Naive thymus-derived CD4-positive, alpha-beta T cell (primary cell): ENCODE measurements at regions of chr5 and their contacts with region 1.

Region 1: DNA sequence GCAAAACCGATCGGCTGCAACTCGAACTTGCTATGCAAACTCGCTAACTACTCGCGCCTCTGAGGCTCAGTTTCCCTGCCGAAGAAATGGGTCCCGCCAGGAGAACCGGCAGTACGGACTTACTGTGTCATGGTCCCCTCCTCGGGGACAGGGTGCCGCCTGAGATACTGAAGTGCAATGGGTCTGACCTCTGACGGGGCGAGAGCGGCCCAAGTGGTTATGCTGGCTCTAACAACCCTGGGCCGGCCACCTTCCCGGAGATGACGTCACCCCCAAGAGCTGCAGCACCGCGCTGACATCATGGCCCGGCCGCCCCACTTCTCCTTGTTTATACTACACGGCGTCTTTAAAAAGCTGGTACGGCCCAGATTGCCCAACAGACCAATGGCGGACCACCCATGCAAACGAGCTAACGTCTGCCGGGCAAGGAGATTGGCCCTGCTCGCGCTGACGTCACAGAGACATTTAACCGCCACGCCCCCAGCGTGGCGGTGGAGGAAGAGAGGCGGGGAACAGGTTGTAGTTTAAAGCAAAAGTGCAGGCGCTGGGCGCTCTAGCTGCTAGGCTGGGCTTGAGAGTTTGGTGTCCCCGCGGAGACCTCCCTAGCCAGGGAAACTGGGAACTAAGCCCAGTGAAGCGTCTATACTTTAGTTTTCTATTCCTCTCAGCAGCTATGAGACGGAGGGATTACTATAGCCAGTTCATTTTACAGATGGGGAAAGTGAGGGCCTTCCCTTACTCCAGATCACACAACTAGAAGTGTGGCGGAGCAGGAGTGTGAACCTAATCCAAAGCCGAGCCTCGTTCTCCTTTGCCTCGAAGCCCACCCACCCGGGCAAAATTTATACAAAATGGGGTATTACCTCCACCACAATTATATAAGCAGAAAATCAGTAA is 654 bp upstream of the RNF44 start:
- DNase-seq: peak; percentile 80 to 99 (median 96)
- ATAC-seq: peak; percentile 83
- H3K4me3 ChIP-seq: peak overlapping the region; percentile 100
- H3K4me3 Mint-ChIP-seq: peak overlapping the region; percentile 96 to 100 (median 99)
- H3K27ac ChIP-seq: peak overlapping the region; percentile 96
- H3K27ac Mint-ChIP-seq: peak overlapping the region; percentile 99 to 100 (median 99)
- H3K4me1 ChIP-seq: peaks cover 57 to 63% of the 10 kb centered on the region in 2 donors
- H3K4me1 Mint-ChIP-seq: peaks cover 55 to 74% (median 71%) of the 10 kb centered on the region in 7 donors
- H3K27me3 ChIP-seq: no peaks in the 10 kb centered on the region
- H3K27me3 Mint-ChIP-seq: no peaks in the 10 kb centered on the region

Region 2: GRCh38 chr5:175517818-175518450 is 1019.9 kb before region 1 on chr5:
- CTCF ChIA-PET with region 1: no interaction called
- POLR2A ChIA-PET with region 1: no interaction called
- intact Hi-C with region 1: loop called in 1 of 2 experiments (anchors 5 kb)
- DNase-seq: peak in 2 of 9 donors; percentile 62 to 81
- ATAC-seq: no peak
- H3K4me3 ChIP-seq: no peak overlapping the region
- H3K4me3 Mint-ChIP-seq: peak overlapping the region; percentile 26 to 80 (median 54)
- H3K27ac ChIP-seq: peak overlapping the region; percentile 22
- H3K27ac Mint-ChIP-seq: peak overlapping the region; percentile 60 to 97 (median 93)
- H3K4me1 ChIP-seq: peaks cover 44 to 50% of the 10 kb centered on the region in 2 donors
- H3K4me1 Mint-ChIP-seq: peaks cover 47 to 87% (median 76%) of the 10 kb centered on the region in 7 donors
- H3K27me3 ChIP-seq: no peaks in the 10 kb centered on the region
- H3K27me3 Mint-ChIP-seq: no peaks in the 10 kb centered on the region

Region 3: GRCh38 chr5:175837171-175837699 is 700.6 kb before region 1 on chr5:
- CTCF ChIA-PET with region 1: no interaction called
- POLR2A ChIA-PET with region 1: no interaction called
- intact Hi-C with region 1: no loop called
- DNase-seq: no peak
- ATAC-seq: no peak
- H3K4me3 ChIP-seq: no peak overlapping the region
- H3K4me3 Mint-ChIP-seq: no peak overlapping the region
- H3K27ac ChIP-seq: no peak overlapping the region
- H3K27ac Mint-ChIP-seq: no peak overlapping the region
- H3K4me1 ChIP-seq: no peaks in the 10 kb centered on the region
- H3K4me1 Mint-ChIP-seq: peaks cover 0 to 1% (median 0%) of the 10 kb centered on the region in 7 donors
- H3K27me3 ChIP-seq: no peaks in the 10 kb centered on the region
- H3K27me3 Mint-ChIP-seq: peaks cover 0 to 4% (median 0%) of the 10 kb centered on the region in 5 donors

Region 4: DNA sequence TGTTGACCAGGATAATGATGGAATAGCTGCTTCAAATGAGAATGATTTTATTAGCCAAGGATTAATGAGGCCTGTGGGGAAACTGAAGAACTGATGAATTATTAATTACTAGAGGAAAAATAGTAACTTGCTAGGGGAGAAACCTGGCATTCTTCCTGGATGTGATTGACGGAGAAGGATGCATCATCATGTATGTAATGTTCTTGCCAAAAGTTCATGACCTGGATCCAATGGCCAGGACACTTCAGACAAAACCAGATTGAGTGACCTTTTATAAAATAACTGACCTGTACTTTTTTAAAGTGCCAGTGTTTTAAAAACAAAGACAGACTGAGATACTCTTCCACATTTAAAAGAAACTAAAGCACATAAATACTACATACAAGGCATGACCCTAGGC is 199.9 kb before region 1 on chr5:
- CTCF ChIA-PET with region 1: no interaction called
- POLR2A ChIA-PET with region 1: no interaction called
- intact Hi-C with region 1: no loop called
- DNase-seq: no peak
- ATAC-seq: no peak
- H3K4me3 ChIP-seq: no peak overlapping the region
- H3K4me3 Mint-ChIP-seq: no peak overlapping the region
- H3K27ac ChIP-seq: no peak overlapping the region
- H3K27ac Mint-ChIP-seq: no peak overlapping the region
- H3K4me1 ChIP-seq: no peaks in the 10 kb centered on the region
- H3K4me1 Mint-ChIP-seq: no peaks in the 10 kb centered on the region
- H3K27me3 ChIP-seq: no peaks in the 10 kb centered on the region
- H3K27me3 Mint-ChIP-seq: no peaks in the 10 kb centered on the region

Region 5: GRCh38 chr5:176388444-176389134 is 149.3 kb before region 1 on chr5 and contains the starts of genes HIGD2A and NOP16:
- CTCF ChIA-PET with region 1: interaction called, 4 read pairs
- POLR2A ChIA-PET with region 1: interaction called, 11 read pairs
- intact Hi-C with region 1: loop called (anchors 1 kb)
- DNase-seq: peak; percentile 89 to 99 (median 98)
- ATAC-seq: peak; percentile 95
- H3K4me3 ChIP-seq: peak within 1 kb of the TSS; percentile 95
- H3K4me3 Mint-ChIP-seq: peak within 1 kb of the TSS; percentile 94 to 100 (median 99)
- H3K27ac ChIP-seq: peak within 1 kb of the TSS; percentile 93
- H3K27ac Mint-ChIP-seq: peak within 1 kb of the TSS; percentile 91 to 100 (median 99)
- H3K4me1 ChIP-seq: peaks cover 18% of the 10 kb centered on the region in 2 donors
- H3K4me1 Mint-ChIP-seq: peaks cover 14 to 42% (median 35%) of the 10 kb centered on the region in 7 donors
- H3K27me3 ChIP-seq: no peaks in the 10 kb centered on the region
- H3K27me3 Mint-ChIP-seq: no peaks in the 10 kb centered on the region
- total RNA-seq, gene HIGD2A: 86.8 to 124 (median 112) TPM
- total RNA-seq, gene NOP16: 12.8 to 35.3 (median 22.2) TPM

Region 6: GRCh38 chr5:176490301-176490700 is 47.6 kb before region 1 on chr5:
- CTCF ChIA-PET with region 1: interaction called, 3 read pairs
- POLR2A ChIA-PET with region 1: interaction called, 11 read pairs
- intact Hi-C with region 1: no loop called
- DNase-seq: no peak
- ATAC-seq: no peak
- H3K4me3 ChIP-seq: no peak overlapping the region
- H3K4me3 Mint-ChIP-seq: peak overlapping the region in 1 of 10 donors; percentile 41
- H3K27ac ChIP-seq: no peak overlapping the region
- H3K27ac Mint-ChIP-seq: peak overlapping the region in 4 of 9 donors; percentile 41 to 69 (median 47)
- H3K4me1 ChIP-seq: peaks cover 13 to 21% of the 10 kb centered on the region in 2 donors
- H3K4me1 Mint-ChIP-seq: peaks cover 26 to 54% (median 40%) of the 10 kb centered on the region in 7 donors
- H3K27me3 ChIP-seq: no peaks in the 10 kb centered on the region
- H3K27me3 Mint-ChIP-seq: no peaks in the 10 kb centered on the region

Region 7: DNA sequence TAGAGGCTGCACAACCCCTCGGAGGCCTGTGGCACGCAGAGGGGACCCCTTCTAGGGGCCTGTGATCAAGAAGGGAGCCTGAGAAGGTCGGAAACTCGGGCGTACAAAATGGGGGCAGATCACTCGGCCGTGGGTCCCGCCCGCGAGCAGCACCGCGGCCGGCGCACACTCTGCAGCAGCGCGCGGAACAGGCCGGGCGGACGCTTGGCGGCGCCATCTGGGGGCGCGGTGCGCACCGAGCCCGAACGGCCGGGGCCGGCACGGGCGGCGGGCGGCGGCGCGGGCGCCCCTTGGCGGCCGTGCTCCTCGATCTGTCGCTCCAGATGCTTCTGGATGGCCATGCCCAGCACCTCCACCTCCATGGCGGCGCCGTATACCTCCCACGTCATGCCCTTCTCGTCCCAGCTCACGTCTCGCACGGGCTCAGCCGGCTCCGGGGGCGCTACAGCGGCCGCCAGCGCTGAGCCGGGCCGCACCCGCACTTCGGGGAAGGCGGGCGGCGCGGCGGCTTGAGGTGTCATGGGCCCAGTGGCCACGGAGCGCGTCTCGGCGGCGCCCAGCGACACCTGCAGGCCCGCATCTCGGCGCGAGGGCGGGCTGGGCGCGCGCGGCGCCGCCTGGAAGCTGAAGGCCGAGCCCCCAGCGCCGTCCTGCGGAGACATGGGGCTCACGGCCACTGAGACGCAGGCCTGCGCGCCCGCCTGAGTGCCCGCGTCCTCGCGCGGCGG is 59.0 kb after region 1 on chr5:
- CTCF ChIA-PET with region 1: no interaction called
- POLR2A ChIA-PET with region 1: no interaction called
- intact Hi-C with region 1: loop called (anchors 2 kb)
- DNase-seq: peak; percentile 53 to 72 (median 67)
- ATAC-seq: peak; percentile 88
- H3K4me3 ChIP-seq: peak overlapping the region; percentile 41
- H3K4me3 Mint-ChIP-seq: peak overlapping the region; percentile 69 to 83 (median 79)
- H3K27ac ChIP-seq: peak overlapping the region; percentile 21
- H3K27ac Mint-ChIP-seq: peak overlapping the region in 7 of 9 donors; percentile 36 to 75 (median 50)
- H3K4me1 ChIP-seq: peaks cover 7% of the 10 kb centered on the region in 2 donors
- H3K4me1 Mint-ChIP-seq: peaks cover 4 to 8% (median 6%) of the 10 kb centered on the region in 7 donors
- H3K27me3 ChIP-seq: no peaks in the 10 kb centered on the region
- H3K27me3 Mint-ChIP-seq: peaks cover 0 to 4% (median 0%) of the 10 kb centered on the region in 5 donors

Region 8: DNA sequence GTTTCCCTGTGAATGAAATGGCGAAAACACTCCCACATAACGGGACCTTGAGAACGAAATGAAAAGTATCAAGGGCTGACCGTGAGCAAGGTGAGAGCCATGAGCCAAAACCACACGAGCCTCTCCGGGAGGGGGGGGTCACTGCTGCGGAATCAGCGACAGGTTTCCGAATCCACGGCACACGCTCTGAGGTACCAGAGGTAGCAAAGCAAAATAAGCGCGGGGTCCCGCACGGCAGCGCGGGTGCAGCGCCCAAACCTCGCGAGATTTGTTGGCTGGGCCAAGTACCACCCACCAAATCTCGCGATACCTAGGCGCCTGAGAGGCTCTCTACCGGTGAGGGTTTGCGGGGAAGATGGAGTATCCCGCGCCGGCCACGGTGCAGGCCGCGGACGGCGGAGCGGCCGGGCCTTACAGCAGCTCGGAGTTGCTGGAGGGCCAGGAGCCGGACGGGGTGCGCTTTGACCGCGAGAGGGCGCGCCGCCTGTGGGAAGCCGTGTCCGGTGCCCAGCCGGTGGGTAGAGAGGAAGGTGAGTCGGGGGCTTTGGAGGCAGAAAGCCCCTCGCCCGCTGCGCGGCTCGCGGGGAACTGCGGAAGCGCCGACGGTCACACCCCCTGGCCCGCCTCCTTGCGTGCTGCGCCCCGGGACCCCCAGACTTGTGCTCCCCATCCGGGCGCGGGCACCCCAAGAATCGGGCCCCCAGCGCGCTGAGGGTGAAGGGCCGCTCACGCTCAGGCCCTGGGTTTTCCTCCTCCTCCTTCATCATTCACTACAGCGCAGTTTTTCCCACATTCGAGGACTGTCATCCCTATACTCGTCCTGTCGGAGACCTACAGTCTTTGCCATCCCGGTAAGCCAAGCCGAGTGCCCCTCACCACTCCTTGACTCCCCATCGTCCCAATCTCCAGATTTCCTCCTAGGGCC is 484.8 kb after region 1 on chr5 and contains the start of gene ZNF346:
- CTCF ChIA-PET with region 1: no interaction called
- POLR2A ChIA-PET with region 1: no interaction called
- intact Hi-C with region 1: loop called in 1 of 2 experiments (anchors 1 kb)
- DNase-seq: peak; percentile 80 to 93 (median 91)
- ATAC-seq: peak; percentile 98
- H3K4me3 ChIP-seq: peak within 1 kb of the TSS; percentile 62
- H3K4me3 Mint-ChIP-seq: peak within 1 kb of the TSS; percentile 97 to 100 (median 99)
- H3K27ac ChIP-seq: peak within 1 kb of the TSS; percentile 91
- H3K27ac Mint-ChIP-seq: peak within 1 kb of the TSS; percentile 95 to 99 (median 98)
- H3K4me1 ChIP-seq: peaks cover 15 to 16% of the 10 kb centered on the region in 2 donors
- H3K4me1 Mint-ChIP-seq: peaks cover 28 to 57% (median 45%) of the 10 kb centered on the region in 7 donors
- H3K27me3 ChIP-seq: no peaks in the 10 kb centered on the region
- H3K27me3 Mint-ChIP-seq: no peaks in the 10 kb centered on the region
- total RNA-seq, gene ZNF346: 18.1 to 28.2 (median 24.0) TPM

Region 9: DNA sequence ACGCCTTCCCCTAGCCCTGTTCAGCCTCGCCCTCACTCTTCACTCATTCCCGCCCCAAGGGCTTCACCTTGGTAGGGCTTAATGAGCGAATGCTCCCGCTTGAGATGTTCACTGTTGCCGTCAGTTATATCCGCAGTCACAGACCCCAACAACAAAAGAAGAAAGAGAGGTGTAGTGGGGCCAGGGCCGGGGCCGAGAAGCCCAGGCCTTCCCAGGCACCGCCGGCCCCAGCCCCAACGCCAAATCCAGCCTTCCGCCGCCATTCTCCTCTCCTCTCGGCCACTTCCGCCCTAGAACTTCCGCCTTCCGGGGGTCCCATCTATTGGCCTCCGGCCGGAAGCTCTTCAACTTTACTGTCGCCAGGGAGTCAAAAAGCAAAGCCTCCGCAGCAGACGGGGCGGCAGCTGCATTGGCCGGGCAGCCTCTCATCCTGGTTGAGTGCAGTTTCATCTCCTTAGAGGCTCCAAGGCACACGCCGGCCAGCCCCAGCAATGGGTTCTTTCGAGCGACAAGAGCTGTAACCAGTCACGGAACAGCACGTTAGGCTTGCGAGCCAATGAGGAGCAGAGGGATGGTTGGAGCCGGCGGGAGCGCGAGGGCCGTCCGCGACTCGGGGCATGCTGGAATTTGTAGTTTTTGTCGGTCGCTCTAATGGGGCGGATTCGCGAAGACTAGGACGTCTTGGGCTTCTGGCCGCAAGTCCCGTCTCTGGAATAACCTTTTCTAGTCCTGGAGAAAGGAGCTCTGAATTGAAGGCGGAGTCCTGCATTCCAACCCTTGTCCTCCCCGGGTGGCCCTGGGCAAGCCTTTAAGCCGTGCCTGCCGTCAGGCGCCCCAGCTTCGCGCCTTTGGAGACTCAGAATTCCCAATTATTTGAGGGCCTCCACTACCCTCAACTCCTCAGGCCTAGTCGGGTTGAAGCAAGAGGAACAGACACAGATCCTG is 813.8 kb after region 1 on chr5 and contains the start of gene LMAN2:
- CTCF ChIA-PET with region 1: no interaction called
- POLR2A ChIA-PET with region 1: no interaction called
- intact Hi-C with region 1: loop called (anchors 1 to 5 kb)
- DNase-seq: peak; percentile 74 to 95 (median 93)
- ATAC-seq: peak; percentile 99
- H3K4me3 ChIP-seq: peak within 1 kb of the TSS; percentile 91
- H3K4me3 Mint-ChIP-seq: peak within 1 kb of the TSS; percentile 93 to 99 (median 98)
- H3K27ac ChIP-seq: peak within 1 kb of the TSS; percentile 95
- H3K27ac Mint-ChIP-seq: peak within 1 kb of the TSS; percentile 93 to 100 (median 99)
- H3K4me1 ChIP-seq: peaks cover 31 to 46% of the 10 kb centered on the region in 2 donors
- H3K4me1 Mint-ChIP-seq: peaks cover 56 to 79% (median 69%) of the 10 kb centered on the region in 7 donors
- H3K27me3 ChIP-seq: no peaks in the 10 kb centered on the region
- H3K27me3 Mint-ChIP-seq: no peaks in the 10 kb centered on the region
- total RNA-seq, gene LMAN2: 71.8 to 144 (median 99.7) TPM

Region 10: DNA sequence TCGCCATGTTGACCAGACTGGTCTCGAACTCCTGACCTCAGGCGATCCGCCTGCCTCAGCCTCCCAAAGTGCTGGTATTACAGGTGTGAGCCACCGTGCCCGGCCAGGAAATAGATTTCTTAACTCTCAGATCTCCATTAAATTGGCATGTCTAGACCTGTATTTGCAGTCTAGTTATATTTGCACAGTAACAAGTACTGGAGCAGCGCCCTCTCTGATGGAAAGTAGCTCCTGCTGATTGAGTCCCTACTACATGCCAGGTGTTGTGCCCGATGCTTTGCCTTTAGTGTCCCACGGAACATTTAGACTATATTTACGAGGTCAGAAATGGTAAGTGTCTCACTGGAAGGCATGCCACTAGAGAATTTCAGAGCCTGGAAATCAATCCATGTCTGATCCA is 1038.3 kb after region 1 on chr5:
- CTCF ChIA-PET with region 1: no interaction called
- POLR2A ChIA-PET with region 1: no interaction called
- intact Hi-C with region 1: no loop called
- DNase-seq: no peak
- ATAC-seq: no peak
- H3K4me3 ChIP-seq: no peak overlapping the region
- H3K4me3 Mint-ChIP-seq: no peak overlapping the region
- H3K27ac ChIP-seq: no peak overlapping the region
- H3K27ac Mint-ChIP-seq: no peak overlapping the region
- H3K4me1 ChIP-seq: no peaks in the 10 kb centered on the region
- H3K4me1 Mint-ChIP-seq: no peaks in the 10 kb centered on the region
- H3K27me3 ChIP-seq: no peaks in the 10 kb centered on the region
- H3K27me3 Mint-ChIP-seq: peaks cover 0 to 7% (median 0%) of the 10 kb centered on the region in 5 donors